Psoas muscle (tissue), 8 donors: ENCODE measurements at regions of chr22 and their contacts with region 1.

Region 1: DNA sequence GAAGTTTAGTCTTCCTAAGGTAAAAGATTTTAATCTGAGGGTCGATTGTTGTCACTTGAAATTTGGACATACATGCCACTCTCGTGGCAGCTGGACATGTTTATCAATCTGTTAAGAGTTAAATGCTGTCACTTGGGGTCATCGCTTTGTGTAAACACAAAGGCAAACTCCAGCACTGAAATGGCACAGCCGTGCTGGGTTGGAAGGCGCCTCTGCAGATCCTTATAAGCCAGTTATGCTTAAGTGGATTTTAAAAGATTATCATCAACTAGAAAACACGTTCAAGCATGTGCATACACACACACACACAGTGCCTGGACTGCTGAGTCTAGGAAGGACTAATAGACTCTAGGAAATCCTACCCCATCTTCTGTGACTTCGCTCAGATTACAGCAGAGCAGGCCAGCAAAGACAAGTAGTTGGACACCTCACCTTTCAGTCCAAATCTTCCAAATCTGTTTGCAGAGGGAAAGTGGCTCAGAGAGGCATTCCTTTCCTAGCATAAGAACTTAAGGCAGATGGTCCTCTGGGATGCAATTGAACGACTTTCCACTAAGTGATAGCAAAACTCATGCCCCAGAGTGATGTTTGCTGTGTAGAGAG is 83.7 kb downstream of the CACNG2 start:
- DNase-seq: no peak
- ATAC-seq: no peak
- H3K4me3 ChIP-seq: no peak overlapping the region
- H3K27ac ChIP-seq: no peak overlapping the region
- H3K4me1 ChIP-seq: no peaks in the 10 kb centered on the region
- H3K27me3 ChIP-seq: peaks cover 0 to 51% (median 9%) of the 10 kb centered on the region in 3 donors
- CTCF ChIP-seq: no peak

Region 2: GRCh38 chr22:34669001-34669400 is 1950.9 kb before region 1 on chr22:
- intact Hi-C with region 1: loop called in 1 of 2 experiments (anchors 5 kb)
- DNase-seq: no peak
- ATAC-seq: no peak
- H3K4me3 ChIP-seq: no peak overlapping the region
- H3K27ac ChIP-seq: no peak overlapping the region
- H3K4me1 ChIP-seq: no peaks in the 10 kb centered on the region
- H3K27me3 ChIP-seq: no peaks in the 10 kb centered on the region
- CTCF ChIP-seq: no peak

Region 3: GRCh38 chr22:36671404-36671803 is 51.5 kb after region 1 on chr22:
- intact Hi-C with region 1: loop called in 1 of 2 experiments (anchors 2 kb)
- DNase-seq: no peak
- ATAC-seq: no peak
- H3K4me3 ChIP-seq: no peak overlapping the region
- H3K27ac ChIP-seq: no peak overlapping the region
- H3K4me1 ChIP-seq: no peaks in the 10 kb centered on the region
- H3K27me3 ChIP-seq: peaks cover 0 to 44% (median 10%) of the 10 kb centered on the region in 3 donors
- CTCF ChIP-seq: no peak